Endothelial cell of umbilical vein (primary cell): ENCODE measurements at regions of chr12 and their contacts with region 1.

Region 1: DNA sequence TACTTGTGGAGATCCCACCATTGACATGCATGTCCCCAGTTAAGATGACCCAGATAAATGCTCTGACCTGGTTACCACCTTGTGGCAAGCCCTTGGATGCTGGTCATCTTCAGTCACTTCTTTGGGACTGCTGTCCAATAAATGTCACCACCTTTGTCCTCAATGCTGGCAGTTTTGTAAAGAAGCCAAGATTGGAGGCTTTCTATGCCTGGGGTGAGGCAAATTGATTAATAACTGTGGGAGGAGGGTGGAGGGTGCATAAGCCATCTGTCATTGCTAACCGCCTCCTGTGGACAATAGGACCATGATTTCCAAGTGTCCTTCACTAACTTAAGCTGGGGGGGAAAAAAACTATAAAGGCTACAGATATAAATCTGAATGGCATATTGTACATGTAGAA is 24.4 kb downstream of the ANKRD13A start:
- DNase-seq: no peak
- H3K4me3 ChIP-seq: no peak overlapping the region
- H3K27ac ChIP-seq: peak overlapping the region; percentile 32
- H3K4me1 ChIP-seq: peaks cover 28% of the 10 kb centered on the region
- H3K27me3 ChIP-seq: no peaks in the 10 kb centered on the region
- CTCF ChIP-seq: no peak
- POLR2A ChIP-seq: no peak

Region 2: DNA sequence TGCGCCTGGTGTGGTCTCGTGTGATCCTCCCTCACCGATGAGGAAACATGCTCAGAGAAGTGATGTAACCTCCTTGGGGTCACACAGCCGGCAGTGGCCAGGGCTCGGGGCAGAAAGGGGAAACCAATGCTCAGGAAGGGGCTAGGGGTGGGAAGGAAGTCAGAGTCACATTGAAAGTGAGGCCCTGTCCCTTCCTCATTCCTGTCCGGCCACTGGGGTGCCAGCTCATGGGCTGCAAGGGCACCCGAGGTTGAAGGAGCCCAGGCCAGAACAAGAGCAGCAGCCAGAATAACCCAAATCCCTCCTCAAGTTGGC is 195.4 kb before region 1 on chr12:
- CTCF ChIA-PET with region 1: no interaction called
- POLR2A ChIA-PET with region 1: no interaction called
- dilution Hi-C with region 1: no loop called
- intact Hi-C with region 1: no loop called
- DNase-seq: peak; percentile 44
- H3K4me3 ChIP-seq: no peak overlapping the region
- H3K27ac ChIP-seq: peak overlapping the region; percentile 32
- H3K4me1 ChIP-seq: peaks cover 11% of the 10 kb centered on the region
- H3K27me3 ChIP-seq: no peaks in the 10 kb centered on the region
- CTCF ChIP-seq: no peak
- POLR2A ChIP-seq: no peak

Region 3: DNA sequence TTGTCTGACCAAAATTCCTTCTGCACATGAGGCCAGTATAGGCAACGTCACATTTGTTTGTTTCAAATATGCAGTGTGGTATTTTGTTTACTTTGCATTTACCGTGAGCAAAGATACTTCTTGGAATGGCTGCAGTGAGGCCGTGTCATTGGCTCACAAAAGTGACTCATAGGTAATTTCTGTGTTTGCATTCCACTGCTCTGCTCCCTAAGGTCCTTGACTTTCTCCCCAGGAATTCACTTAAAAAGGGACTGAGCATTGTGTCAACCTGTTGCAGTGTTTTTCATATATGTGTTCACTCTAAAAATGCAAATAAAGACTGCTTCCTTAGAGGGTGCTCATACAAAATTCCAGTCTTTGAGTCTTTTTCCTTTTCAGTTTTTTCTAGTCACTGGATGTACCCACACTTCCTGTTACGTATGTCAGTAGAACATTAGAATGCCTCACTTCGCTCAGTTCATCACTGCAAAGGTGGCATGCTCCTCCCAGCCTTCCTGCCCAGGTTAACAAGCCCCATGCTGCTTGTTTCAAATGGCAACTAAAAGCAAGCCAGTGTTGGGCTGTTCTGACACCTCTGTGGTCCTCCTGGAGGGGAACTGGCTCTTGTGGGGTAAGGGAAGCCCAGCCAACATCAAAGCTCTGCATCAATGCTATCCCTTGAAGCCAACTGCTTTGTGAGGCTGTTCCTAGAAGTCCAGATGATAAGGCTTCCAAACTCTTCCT is 15.6 kb after region 1 on chr12:
- CTCF ChIA-PET with region 1: interaction called, 12 read pairs
- POLR2A ChIA-PET with region 1: no interaction called
- dilution Hi-C with region 1: no loop called
- intact Hi-C with region 1: loop called (anchors 1 kb)
- DNase-seq: peak; percentile 74
- H3K4me3 ChIP-seq: no peak overlapping the region
- H3K27ac ChIP-seq: peak overlapping the region; percentile 90
- H3K4me1 ChIP-seq: peaks cover 29% of the 10 kb centered on the region
- H3K27me3 ChIP-seq: no peaks in the 10 kb centered on the region
- CTCF ChIP-seq: no peak
- POLR2A ChIP-seq: no peak

Region 4: DNA sequence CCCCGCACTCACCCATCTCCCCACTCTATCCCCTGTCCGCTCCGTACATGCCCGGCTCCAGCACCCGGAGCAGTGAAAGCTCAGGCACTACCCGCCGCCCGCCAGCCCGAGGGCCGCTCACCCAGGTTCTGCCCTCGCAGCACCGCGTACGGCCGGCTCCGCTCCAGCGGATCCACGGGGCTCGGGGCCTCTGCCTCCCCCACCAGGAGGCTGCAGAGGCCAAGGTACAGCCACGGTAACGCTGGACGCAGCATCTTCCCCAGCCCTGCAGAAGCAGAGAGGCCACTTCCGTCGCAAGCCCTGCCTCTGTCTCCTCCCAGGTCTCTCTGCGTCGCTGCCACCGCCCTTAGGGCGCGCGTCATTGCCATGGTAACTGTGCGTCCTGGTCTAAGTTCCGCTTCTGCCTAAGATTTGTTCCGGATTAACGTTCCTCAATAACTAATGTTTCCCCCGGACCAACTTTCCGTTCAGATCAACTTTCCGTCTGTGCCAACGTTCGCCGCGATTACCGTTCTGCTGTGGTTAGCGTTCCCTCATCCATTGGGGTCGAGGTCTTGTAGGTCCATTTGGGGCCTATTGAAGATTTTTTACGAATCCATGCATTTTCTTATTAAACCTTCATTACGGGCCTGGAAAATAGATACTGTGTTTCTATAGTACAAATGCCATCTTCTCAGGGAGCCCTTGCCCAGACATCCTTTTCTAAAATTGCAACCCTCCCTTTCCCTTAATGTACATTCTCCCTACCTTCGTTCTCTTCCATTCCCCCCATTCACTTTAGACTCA is 24.8 kb after region 1 on chr12 and contains the start of gene C12orf76:
- CTCF ChIA-PET with region 1: interaction called, 5 read pairs
- POLR2A ChIA-PET with region 1: no interaction called
- dilution Hi-C with region 1: no loop called
- intact Hi-C with region 1: loop called (anchors 1 kb)
- DNase-seq: peak; percentile 95
- H3K4me3 ChIP-seq: peak within 1 kb of the TSS; percentile 55 to 87 (median 61)
- H3K27ac ChIP-seq: peak within 1 kb of the TSS; percentile 33
- H3K4me1 ChIP-seq: peaks cover 10% of the 10 kb centered on the region
- H3K27me3 ChIP-seq: no peaks in the 10 kb centered on the region
- CTCF ChIP-seq: no peak
- POLR2A ChIP-seq: peak; percentile 96
- total RNA-seq, gene C12orf76: 11.9 and 13.4 TPM in 2 replicates